ENCODE measurements at regions of chr7 and their contacts with region 1.

Region 1: DNA sequence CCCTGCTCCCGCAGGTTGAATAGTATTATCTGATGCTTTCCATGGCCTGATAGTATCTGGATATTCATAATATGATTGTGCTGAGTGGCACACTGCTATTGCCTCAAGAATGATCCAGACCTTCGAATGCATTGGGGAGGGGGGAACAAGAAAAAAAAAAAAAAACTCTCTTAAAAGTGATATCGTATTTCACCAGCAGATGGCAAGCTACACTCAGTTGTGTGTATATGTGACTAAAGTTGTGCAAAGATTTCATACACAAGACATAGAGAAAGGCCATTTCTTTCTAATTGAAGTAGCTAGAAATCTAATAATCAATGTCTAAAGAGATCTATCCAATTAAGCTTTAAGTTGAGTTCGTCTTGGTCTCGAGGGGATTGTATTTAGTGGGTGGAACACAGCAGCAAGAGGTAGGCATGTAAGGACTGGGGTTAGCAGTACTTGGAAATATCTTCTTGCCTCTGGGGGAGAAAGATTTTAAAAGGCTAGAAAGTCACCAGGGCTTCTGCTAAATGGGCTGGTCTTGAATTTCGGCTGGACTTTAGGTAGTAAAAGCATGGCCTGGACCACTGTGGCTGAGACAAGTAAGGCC is 15.3 kb downstream of the SFRP4 start:
- DNase-seq: no peak
- ATAC-seq: peak; percentile 30

Region 2: GRCh38 chr7:38107486-38107893 is 206.2 kb after region 1 on chr7:
- intact Hi-C with region 1: loop called in 1 of 2 experiments (anchors 10 kb)
- DNase-seq: peak; percentile 29 to 79
- ATAC-seq: peak; percentile 86

Region 3: GRCh38 chr7:38222481-38223096 is 321.3 kb after region 1 on chr7:
- intact Hi-C with region 1: loop called in 1 of 2 experiments (anchors 5 kb)
- DNase-seq: no peak
- ATAC-seq: peak; percentile 85

Region 4: GRCh38 chr7:38411404-38411803 is 510.1 kb after region 1 on chr7:
- intact Hi-C with region 1: no loop called
- DNase-seq: no peak
- ATAC-seq: no peak

Measured in left colon (tissue), 2 donors.